Breast epithelium (tissue), 4 donors: ENCODE measurements at regions of chr14 and their contacts with region 1.

Region 1: DNA sequence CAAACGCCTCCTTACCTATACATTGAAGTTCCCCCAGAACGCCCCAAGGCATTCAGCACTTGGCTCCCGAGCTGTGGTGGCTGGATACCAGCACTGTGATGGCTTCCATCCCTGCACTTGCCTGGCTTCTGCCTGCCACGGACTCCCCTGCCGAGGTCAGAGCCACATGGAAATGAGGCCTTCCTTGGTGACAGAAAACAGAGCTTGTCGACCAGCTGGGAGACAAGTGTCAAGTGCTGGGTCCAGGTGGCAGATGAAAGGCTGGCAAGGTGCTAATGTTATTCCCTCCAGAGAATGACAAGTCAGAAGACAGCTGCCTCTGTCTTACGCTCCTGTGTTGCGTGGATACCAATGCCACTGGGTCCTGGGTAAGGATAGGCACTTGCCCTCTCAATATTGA is 26.2 kb upstream of the GNG2 start:
- DNase-seq: no peak
- H3K4me3 ChIP-seq: no peak overlapping the region
- H3K27ac ChIP-seq: no peak overlapping the region
- H3K4me1 ChIP-seq: no peaks in the 10 kb centered on the region
- H3K27me3 ChIP-seq: no peaks in the 10 kb centered on the region
- CTCF ChIP-seq: no peak
- POLR2A ChIP-seq: no peak

Region 2: DNA sequence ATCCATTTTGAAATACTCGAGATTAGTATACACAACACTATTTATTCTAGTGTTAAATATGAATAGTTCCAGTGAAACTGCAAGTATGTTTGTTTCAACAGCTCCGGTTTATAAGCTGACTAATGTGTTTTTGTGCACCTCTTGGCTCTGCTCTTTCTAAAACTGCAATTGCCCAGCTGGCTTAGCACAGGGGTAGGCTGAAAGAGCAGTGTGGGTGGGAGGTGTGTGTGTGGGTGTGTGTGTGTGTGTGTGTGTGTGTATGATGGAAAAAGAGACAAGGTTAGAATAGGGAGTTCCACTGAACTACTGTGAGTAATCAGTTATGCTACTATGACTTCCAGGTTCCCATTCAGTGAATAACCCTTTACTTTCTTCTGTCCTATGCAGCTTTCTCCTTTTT is 1356.7 kb after region 1 on chr14:
- intact Hi-C with region 1: loop called (anchors 5 kb)
- DNase-seq: no peak
- H3K4me3 ChIP-seq: no peak overlapping the region
- H3K27ac ChIP-seq: no peak overlapping the region
- H3K4me1 ChIP-seq: no peaks in the 10 kb centered on the region
- H3K27me3 ChIP-seq: no peaks in the 10 kb centered on the region
- CTCF ChIP-seq: no peak
- POLR2A ChIP-seq: no peak